Activated naive CD4-positive, alpha-beta T cell treated with anti-CD3 and anti-CD28 coated beads for 36 hours (primary cell): ENCODE measurements at regions of chr2 and their contacts with region 1.

Region 1: GRCh38 chr2:161166538-161167409 is 6.5 kb downstream of the TANK start:
- DNase-seq: peak; percentile 88
- H3K4me3 Mint-ChIP-seq: no peak overlapping the region
- H3K27ac Mint-ChIP-seq: peak overlapping the region; percentile 74
- H3K4me1 Mint-ChIP-seq: peaks cover 88% of the 10 kb centered on the region
- H3K27me3 Mint-ChIP-seq: no peaks in the 10 kb centered on the region

Region 2: DNA sequence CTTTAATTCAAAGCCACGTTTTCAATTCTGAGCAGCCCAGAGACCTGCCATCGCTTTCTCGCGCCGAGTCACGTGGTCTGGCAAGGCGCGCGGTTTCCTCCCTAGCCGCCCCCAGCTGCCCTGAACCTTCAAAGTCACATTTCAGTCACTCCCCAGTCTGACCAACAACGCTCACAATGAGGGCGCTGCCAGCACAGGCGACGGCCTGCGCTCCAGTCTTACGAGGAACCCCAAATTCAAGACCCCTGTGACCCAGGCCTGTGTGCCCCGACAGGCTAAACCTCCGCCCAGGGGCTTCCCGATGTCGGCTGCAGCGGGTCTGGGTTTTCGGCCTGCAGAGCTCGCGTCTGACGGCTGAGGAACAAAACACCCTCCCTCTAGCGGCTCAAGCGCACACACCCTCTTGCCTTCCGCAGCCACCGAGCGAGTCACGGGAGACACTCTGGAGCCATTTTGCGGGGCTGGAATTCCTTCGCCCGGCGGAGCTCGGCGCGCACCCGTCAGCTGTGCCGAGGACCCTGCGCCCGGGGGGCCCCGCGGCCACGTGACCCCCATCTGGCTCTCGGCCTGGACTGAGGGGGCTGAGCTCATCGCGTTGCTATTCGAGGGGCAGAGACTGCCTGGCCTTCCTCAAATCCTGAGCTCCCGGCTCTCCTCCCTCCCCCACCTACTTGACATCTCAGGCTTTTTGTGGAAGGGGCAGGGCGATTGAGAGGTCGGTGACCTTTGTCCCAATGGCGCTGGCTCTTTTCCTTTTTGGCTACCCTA is 896.8 kb before region 1 on chr2:
- CTCF ChIA-PET with region 1: no interaction called
- intact Hi-C with region 1: loop called (anchors 2 kb)
- DNase-seq: peak; percentile 64
- H3K4me3 Mint-ChIP-seq: peak overlapping the region; percentile 65
- H3K27ac Mint-ChIP-seq: peak overlapping the region; percentile 53
- H3K4me1 Mint-ChIP-seq: peaks cover 39% of the 10 kb centered on the region
- H3K27me3 Mint-ChIP-seq: no peaks in the 10 kb centered on the region

Region 3: GRCh38 chr2:160301420-160301819 is 865.4 kb before region 1 on chr2:
- CTCF ChIA-PET with region 1: no interaction called
- intact Hi-C with region 1: loop called (anchors 2 kb)
- DNase-seq: peak; percentile 73
- H3K4me3 Mint-ChIP-seq: no peak overlapping the region
- H3K27ac Mint-ChIP-seq: peak overlapping the region; percentile 76
- H3K4me1 Mint-ChIP-seq: peaks cover 63% of the 10 kb centered on the region
- H3K27me3 Mint-ChIP-seq: no peaks in the 10 kb centered on the region

Region 4: GRCh38 chr2:161122772-161123530 is 43.8 kb before region 1 on chr2:
- CTCF ChIA-PET with region 1: no interaction called
- intact Hi-C with region 1: loop called (anchors 1 kb)
- DNase-seq: peak; percentile 70
- H3K4me3 Mint-ChIP-seq: no peak overlapping the region
- H3K27ac Mint-ChIP-seq: peak overlapping the region; percentile 3
- H3K4me1 Mint-ChIP-seq: peaks cover 20% of the 10 kb centered on the region
- H3K27me3 Mint-ChIP-seq: peaks cover 3% of the 10 kb centered on the region

Region 5: DNA sequence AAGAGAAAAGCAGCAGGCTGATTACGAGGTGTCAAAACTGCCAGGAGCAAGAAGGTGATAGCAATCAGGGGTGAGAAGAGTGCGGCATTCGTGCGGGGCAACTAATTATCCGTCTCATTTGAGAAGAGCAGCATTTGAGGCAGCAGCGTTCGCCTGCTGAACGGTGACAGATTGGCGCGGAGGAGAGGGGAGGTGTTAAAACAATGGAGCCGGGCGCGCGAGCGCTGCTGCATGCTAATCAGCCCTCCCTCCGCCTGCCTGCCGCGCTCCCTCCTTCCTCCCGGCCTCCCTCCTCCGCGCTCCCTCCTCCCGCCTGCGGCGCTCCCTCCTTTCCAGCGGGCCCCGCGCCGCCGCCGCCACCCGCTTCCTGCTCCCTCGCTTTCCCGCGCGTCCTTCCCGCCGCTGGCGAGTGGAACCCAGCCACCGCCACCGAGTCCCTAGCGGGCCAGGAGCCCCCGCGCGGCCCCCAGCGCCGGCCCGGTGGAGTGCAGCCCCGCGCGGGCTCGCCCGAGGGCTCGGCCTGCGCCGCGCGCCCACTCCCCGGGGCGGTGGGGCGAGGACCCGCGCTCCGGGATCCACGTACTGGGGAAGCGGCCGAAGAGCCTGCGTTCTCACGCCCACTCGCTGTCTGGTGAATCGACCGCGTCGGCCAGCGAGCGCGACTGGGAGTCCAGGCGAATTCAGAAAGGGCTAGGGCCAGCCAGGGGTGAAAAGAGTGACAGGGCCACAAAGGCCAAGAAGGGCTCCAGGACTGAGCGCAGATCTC is 72.0 kb after region 1 on chr2:
- CTCF ChIA-PET with region 1: no interaction called
- intact Hi-C with region 1: loop called (anchors 1 kb)
- DNase-seq: peak; percentile 71
- H3K4me3 Mint-ChIP-seq: peak overlapping the region; percentile 84
- H3K27ac Mint-ChIP-seq: peak overlapping the region; percentile 47
- H3K4me1 Mint-ChIP-seq: peaks cover 47% of the 10 kb centered on the region
- H3K27me3 Mint-ChIP-seq: no peaks in the 10 kb centered on the region

Region 6: DNA sequence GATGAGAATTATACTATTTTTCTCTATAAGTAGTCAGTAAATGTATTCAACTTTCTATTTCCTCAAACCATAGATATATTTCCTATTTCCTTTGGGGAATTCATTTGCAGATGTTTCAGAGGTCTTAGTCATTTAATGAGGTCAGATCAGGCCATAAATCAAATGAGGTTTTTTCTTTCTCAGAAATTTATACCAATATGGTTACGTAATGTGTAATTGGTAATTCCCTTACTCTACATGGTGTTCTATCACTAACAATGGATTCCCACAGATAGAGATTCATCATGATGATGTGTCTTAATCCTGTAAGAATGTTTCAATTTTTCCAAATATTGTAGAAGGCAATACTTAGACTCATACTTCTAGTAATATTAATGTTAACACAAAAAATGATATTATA is 799.2 kb after region 1 on chr2:
- CTCF ChIA-PET with region 1: no interaction called
- intact Hi-C with region 1: loop called (anchors 5 kb)
- DNase-seq: no peak
- H3K4me3 Mint-ChIP-seq: no peak overlapping the region
- H3K27ac Mint-ChIP-seq: no peak overlapping the region
- H3K4me1 Mint-ChIP-seq: peaks cover 28% of the 10 kb centered on the region
- H3K27me3 Mint-ChIP-seq: no peaks in the 10 kb centered on the region